ENCODE measurements at regions of chr17 and their contacts with region 1.

Region 1: DNA sequence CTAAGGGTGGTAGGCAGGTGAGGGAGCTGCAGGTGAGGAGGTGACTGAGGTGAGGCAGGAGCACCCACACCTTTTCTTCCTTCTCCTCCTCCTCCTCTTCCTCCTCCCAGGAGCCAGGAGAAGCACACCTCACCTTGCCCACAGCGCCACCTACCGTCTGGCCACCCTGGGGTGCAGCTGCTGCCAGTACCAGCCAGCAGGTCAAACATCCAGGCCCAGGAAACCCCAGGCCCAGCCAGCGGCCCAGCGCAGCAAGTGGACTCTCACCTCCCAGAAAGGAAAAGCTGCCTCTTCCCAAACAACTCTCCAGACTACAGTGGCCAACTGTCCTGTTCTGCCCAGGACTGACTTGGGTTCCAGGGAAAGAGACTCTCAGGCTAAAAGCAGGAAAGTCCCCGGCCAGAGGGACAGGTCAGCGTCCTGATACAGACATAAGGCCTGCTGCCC is 22.7 kb downstream of the PEMT start:
- DNase-seq: peak; percentile 85 to 92
- H3K4me3 ChIP-seq: no peak overlapping the region
- H3K4me3 Mint-ChIP-seq: no peak overlapping the region
- H3K27ac Mint-ChIP-seq: peak overlapping the region; percentile 76
- H3K4me1 ChIP-seq: peaks cover 17% of the 10 kb centered on the region
- H3K4me1 Mint-ChIP-seq: peaks cover 12% of the 10 kb centered on the region
- H3K27me3 ChIP-seq: no peaks in the 10 kb centered on the region
- H3K27me3 Mint-ChIP-seq: no peaks in the 10 kb centered on the region
- CTCF ChIP-seq: peak; percentile 93 to 95

Region 2: DNA sequence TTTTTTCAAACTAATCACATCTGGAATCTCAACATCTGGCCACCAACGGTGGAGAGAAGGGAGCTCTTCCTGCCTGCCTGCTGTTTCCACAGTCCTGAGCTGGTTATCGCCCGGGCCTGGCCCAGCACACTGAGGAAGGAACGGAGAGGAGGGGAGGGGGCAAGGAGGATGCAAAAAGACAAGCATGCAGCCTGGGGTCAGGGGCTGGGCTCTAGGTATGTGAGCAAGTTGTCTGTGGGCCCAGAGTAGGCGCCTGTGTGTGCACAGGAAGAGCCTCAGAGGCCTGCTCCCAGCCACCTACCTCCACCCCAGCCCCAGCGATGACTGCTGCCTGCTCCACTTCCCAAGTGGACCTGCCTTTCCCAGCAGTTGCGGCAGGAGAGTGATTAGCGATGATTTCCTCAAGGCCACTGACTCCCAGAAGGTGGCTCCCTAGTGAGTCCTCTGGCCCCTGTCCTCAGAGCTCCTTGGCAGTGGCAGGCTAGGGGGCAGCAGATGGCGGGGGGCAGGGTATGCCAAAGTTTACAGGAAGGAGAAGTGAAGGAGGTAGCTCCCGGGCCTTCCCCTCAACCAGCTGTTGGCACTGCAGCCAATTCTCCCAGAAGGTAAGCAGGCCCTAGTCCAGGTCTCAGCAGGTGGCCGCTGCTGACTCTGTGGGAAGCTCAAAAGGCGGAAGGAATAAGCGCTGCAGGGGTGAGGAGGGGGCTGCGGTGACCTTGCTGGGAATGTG is 45.6 kb before region 1 on chr17:
- CTCF ChIA-PET with region 1: interaction called, 8 read pairs
- POLR2A ChIA-PET with region 1: no interaction called
- intact Hi-C with region 1: loop called (anchors 1 kb)
- DNase-seq: no peak
- H3K4me3 ChIP-seq: no peak overlapping the region
- H3K4me3 Mint-ChIP-seq: no peak overlapping the region
- H3K27ac Mint-ChIP-seq: no peak overlapping the region
- H3K4me1 ChIP-seq: no peaks in the 10 kb centered on the region
- H3K4me1 Mint-ChIP-seq: no peaks in the 10 kb centered on the region
- H3K27me3 ChIP-seq: no peaks in the 10 kb centered on the region
- H3K27me3 Mint-ChIP-seq: no peaks in the 10 kb centered on the region
- CTCF ChIP-seq: no peak

Region 3: DNA sequence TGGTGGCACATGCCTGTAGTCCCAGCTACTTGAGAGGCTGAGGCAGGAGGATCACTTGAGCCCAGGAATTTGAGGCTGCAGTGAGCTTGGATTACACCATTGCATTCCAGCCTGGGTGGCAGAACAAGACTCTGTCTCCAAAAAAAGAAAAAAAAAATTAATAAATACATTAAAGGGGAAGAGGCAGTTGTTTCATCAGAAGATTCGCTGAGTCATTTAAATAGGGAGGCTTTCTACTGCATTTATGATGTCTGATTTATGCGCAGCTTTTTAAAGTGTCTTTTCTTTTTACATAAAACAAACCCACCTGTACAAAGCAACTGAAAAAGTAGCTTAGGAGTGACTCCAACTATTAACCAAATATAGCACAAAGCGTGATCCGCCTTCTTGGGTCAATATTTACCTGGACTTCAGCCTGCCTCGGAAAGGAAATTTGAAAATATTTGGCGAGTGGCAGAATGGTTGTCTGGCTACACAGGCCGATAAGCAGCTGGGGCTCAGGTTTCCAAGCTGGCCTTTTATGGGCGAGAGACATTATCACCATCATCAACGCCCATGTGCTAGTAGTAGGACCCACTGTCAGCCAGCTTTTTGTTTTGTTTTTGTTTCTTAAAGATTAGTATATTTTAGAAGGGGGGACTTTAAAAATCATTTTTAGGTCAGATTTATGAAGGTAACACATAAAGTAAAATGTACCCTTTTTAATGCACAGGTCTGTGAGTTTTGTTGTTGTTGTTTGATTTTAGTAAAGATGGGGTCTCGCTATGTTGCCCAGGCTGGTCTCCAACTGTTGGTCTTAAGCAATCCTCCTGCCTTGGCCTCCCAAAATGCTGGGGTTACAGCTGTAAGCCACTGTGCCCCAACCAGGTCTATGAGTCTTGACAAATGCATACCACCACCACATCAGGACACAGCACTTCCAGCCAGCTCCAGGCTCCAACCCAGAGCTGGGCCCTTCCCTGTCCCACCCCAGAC is 30.1 kb before region 1 on chr17:
- CTCF ChIA-PET with region 1: interaction called, 9 read pairs
- POLR2A ChIA-PET with region 1: no interaction called
- intact Hi-C with region 1: loop called (anchors 1 kb)
- DNase-seq: peak; percentile 92
- H3K4me3 ChIP-seq: no peak overlapping the region
- H3K4me3 Mint-ChIP-seq: peak overlapping the region; percentile 27
- H3K27ac Mint-ChIP-seq: peak overlapping the region; percentile 90
- H3K4me1 ChIP-seq: peaks cover 42% of the 10 kb centered on the region
- H3K4me1 Mint-ChIP-seq: peaks cover 19% of the 10 kb centered on the region
- H3K27me3 ChIP-seq: no peaks in the 10 kb centered on the region
- H3K27me3 Mint-ChIP-seq: no peaks in the 10 kb centered on the region
- CTCF ChIP-seq: no peak

Region 4: GRCh38 chr17:17641621-17642409 is 73.0 kb after region 1 on chr17:
- CTCF ChIA-PET with region 1: no interaction called
- POLR2A ChIA-PET with region 1: no interaction called
- intact Hi-C with region 1: loop called (anchors 2 kb)
- DNase-seq: peak; percentile 79 to 85
- H3K4me3 ChIP-seq: no peak overlapping the region
- H3K4me3 Mint-ChIP-seq: no peak overlapping the region
- H3K27ac Mint-ChIP-seq: no peak overlapping the region
- H3K4me1 ChIP-seq: no peaks in the 10 kb centered on the region
- H3K4me1 Mint-ChIP-seq: peaks cover 3% of the 10 kb centered on the region
- H3K27me3 ChIP-seq: no peaks in the 10 kb centered on the region; the same call in 1 of the 2 replicates
- H3K27me3 Mint-ChIP-seq: no peaks in the 10 kb centered on the region
- CTCF ChIP-seq: peak; percentile 94 to 95